ENCODE measurements at regions of chr1 and their contacts with region 1.

Region 1: GRCh38 chr1:54081306-54082270 is 28.2 kb downstream of the TCEANC2 start:
- H3K4me3 ChIP-seq: no peak overlapping the region
- H3K27ac ChIP-seq: no peak overlapping the region
- H3K4me1 ChIP-seq: no peaks in the 10 kb centered on the region
- CTCF ChIP-seq: peak; percentile 41; the same call in 1 of the 2 replicates

Region 2: GRCh38 chr1:54070171-54070837 is 11.3 kb before region 1 on chr1:
- CTCF ChIA-PET with region 1: interaction called, 20 read pairs
- POLR2A ChIA-PET with region 1: no interaction called
- H3K4me3 ChIP-seq: no peak overlapping the region
- H3K27ac ChIP-seq: no peak overlapping the region
- H3K4me1 ChIP-seq: no peaks in the 10 kb centered on the region
- CTCF ChIP-seq: peak; percentile 70

Region 3: GRCh38 chr1:54091666-54092065 is 10.1 kb after region 1 on chr1:
- CTCF ChIA-PET with region 1: interaction called, 21 read pairs
- POLR2A ChIA-PET with region 1: no interaction called
- H3K4me3 ChIP-seq: no peak overlapping the region
- H3K27ac ChIP-seq: no peak overlapping the region
- H3K4me1 ChIP-seq: no peaks in the 10 kb centered on the region
- CTCF ChIP-seq: no peak

Region 4: GRCh38 chr1:54112705-54113368 is 31.2 kb after region 1 on chr1:
- CTCF ChIA-PET with region 1: interaction called, 12 read pairs
- POLR2A ChIA-PET with region 1: no interaction called
- H3K4me3 ChIP-seq: no peak overlapping the region
- H3K27ac ChIP-seq: no peak overlapping the region
- H3K4me1 ChIP-seq: no peaks in the 10 kb centered on the region
- CTCF ChIP-seq: no peak